Right ventricle myocardium inferior (tissue), 1 donor: ENCODE measurements at regions of chr1 and their contacts with region 1.

Region 1: DNA sequence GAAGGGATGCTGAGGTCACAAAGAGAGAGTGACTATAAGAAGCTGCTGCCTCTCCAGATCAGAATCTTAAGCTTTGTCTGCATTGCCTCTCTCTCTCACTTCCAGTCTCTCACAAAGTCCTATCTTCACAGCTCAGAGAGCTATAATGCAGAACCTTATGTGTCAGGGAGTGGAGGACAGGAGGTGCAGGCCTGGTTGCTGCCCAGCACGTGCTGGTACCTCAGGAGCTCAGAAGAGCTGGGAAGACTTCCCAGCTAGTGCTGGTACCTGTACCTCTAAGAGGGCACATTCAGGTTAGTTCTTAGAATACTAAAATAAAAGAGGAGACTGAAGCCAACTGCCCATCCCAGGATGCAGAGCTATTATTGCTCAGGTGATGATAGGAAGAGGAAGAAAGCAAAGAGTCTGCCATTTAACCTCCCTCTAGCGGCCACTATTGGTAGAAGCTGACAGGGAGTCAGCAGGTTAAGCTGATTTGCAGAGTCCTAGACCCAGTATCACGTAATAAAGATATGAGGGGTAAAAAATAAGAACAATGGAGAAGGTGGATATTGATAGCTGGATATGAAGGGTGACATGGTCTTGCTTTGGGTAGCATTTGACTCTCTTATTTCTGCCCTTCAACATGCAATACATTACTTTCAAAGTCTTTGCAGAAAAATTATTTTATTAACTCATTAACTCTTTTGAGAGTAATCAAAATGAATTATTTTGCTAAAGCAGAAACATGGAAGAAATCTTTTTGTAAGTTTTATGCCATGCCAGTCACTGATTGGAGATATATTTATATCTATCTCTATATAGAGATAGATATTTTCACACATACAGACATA is 138.1 kb upstream of the HMCN1 start:
- DNase-seq: no peak
- ATAC-seq: peak; percentile 38

Region 2: GRCh38 chr1:185317034-185317885 is 278.8 kb before region 1 on chr1 and contains the start of gene IVNS1ABP:
- intact Hi-C with region 1: loop called (anchors 2 kb)
- DNase-seq: peak; percentile 97
- ATAC-seq: peak; percentile 91
- total RNA-seq, gene IVNS1ABP: 59.0 TPM

Region 3: GRCh38 chr1:185488808-185489207 is 107.2 kb before region 1 on chr1:
- intact Hi-C with region 1: loop called (anchors 1 kb)
- DNase-seq: no peak
- ATAC-seq: peak; percentile 78

Region 4: GRCh38 chr1:185559684-185560331 is 36.2 kb before region 1 on chr1:
- intact Hi-C with region 1: no loop called
- DNase-seq: no peak
- ATAC-seq: peak; percentile 77

Region 5: DNA sequence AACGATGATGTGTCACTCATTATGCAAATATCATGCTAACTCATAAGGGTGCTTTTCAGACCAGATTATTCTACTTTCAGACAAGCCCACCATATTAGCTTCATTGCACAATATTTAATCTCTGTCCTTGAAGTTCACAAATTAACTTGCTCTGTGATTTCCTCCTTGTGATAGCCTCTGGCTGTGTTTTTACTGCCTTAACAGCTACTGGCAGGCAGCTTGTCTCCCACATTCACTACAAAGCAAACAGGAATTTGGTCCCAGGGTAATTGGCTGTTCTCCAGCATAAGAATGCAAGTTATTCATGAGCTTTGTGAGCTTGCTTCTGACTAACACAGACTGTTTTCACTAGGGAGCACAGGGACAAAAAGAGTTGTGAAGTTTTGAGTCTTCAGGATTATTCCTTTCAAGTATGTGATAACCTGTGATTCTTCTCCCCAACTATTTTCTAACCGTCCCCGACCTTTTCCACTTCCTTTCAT is 50.2 kb after region 1 on chr1:
- intact Hi-C with region 1: loop called (anchors 5 kb)
- DNase-seq: no peak
- ATAC-seq: peak; percentile 91